A673 (cell line): ENCODE measurements at regions of chr1 and their contacts with region 1.

Region 1: GRCh38 chr1:36223993-36224536 is at the start of gene THRAP3:
- DNase-seq: peak; percentile 100
- H3K4me3 ChIP-seq: peak within 1 kb of the TSS; percentile 61
- H3K27ac ChIP-seq: peak within 1 kb of the TSS; percentile 95
- H3K4me1 ChIP-seq: peaks cover 13% of the 10 kb centered on the region
- H3K27me3 ChIP-seq: no peaks in the 10 kb centered on the region
- CTCF ChIP-seq: no peak
- total RNA-seq, gene THRAP3: 133 and 143 TPM in 2 replicates

Region 2: DNA sequence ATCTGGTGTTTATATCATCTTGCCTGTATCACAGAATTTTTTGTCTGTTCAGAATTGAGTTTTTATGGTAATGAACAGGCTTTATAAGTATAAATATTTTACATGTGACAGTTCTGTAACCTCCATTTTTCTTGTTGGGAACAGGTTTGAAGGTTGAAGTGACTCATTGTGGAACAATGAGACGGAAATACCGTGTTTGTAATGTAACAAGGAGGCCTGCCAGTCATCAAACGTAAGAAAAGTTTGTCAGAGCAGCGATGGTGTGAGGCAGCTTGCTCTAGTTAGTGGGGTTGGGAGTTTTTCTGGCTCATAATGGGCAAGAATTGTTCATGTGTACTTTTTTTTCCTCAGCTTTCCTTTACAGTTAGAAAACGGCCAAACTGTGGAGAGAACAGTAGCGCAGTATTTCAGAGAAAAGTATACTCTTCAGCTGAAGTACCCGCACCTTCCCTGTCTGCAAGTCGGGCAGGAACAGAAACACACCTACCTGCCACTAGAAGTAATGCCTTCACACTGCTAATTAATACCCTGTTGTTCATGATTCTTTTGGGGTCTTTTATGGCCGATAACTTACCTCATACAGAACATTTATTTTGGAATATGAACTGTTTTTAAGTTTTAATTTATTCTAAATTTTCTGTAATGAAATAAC is 215.4 kb before region 1 on chr1:
- CTCF ChIA-PET with region 1: no interaction called
- POLR2A ChIA-PET with region 1: no interaction called
- intact Hi-C with region 1: no loop called
- DNase-seq: no peak
- H3K4me3 ChIP-seq: no peak overlapping the region
- H3K27ac ChIP-seq: no peak overlapping the region
- H3K4me1 ChIP-seq: no peaks in the 10 kb centered on the region
- H3K27me3 ChIP-seq: no peaks in the 10 kb centered on the region
- CTCF ChIP-seq: no peak

Region 3: GRCh38 chr1:36248250-36248894 is 24.3 kb after region 1 on chr1:
- CTCF ChIA-PET with region 1: interaction called, 11 read pairs
- POLR2A ChIA-PET with region 1: no interaction called
- intact Hi-C with region 1: no loop called
- DNase-seq: no peak
- H3K4me3 ChIP-seq: no peak overlapping the region
- H3K27ac ChIP-seq: no peak overlapping the region
- H3K4me1 ChIP-seq: peaks cover 10% of the 10 kb centered on the region
- H3K27me3 ChIP-seq: no peaks in the 10 kb centered on the region
- CTCF ChIP-seq: no peak

Region 4: DNA sequence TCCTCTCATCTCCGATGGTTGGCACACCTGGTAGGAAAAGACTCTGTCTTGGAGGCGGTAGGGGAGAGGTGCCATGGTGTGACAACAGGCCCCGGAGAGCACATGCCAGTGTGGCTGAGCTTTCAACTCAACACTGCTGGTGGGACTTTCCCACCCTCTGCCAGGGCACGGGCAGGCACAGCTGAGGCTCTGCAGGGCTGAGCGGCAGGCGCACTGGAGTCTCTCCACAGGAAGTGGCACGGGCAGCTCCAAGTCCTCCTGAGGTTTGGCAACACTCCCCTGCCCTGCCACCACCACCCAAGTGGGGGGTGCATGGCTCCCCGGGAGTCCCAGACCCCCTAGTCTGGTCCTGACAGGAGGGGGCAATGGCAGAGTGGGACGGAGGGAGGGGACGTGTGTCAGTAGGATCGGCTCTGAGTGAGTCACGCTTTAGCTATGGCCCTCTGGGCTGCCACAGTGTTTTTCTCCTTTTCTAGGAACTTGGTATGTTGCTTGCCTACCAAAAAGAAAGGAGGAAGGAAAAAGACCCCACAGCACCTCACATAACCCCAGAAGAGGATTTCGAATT is 126.7 kb after region 1 on chr1:
- CTCF ChIA-PET with region 1: no interaction called
- POLR2A ChIA-PET with region 1: no interaction called
- intact Hi-C with region 1: no loop called
- DNase-seq: peak; percentile 49
- H3K4me3 ChIP-seq: no peak overlapping the region
- H3K27ac ChIP-seq: peak overlapping the region; percentile 66
- H3K4me1 ChIP-seq: peaks cover 19% of the 10 kb centered on the region
- H3K27me3 ChIP-seq: no peaks in the 10 kb centered on the region
- CTCF ChIP-seq: no peak

Region 5: DNA sequence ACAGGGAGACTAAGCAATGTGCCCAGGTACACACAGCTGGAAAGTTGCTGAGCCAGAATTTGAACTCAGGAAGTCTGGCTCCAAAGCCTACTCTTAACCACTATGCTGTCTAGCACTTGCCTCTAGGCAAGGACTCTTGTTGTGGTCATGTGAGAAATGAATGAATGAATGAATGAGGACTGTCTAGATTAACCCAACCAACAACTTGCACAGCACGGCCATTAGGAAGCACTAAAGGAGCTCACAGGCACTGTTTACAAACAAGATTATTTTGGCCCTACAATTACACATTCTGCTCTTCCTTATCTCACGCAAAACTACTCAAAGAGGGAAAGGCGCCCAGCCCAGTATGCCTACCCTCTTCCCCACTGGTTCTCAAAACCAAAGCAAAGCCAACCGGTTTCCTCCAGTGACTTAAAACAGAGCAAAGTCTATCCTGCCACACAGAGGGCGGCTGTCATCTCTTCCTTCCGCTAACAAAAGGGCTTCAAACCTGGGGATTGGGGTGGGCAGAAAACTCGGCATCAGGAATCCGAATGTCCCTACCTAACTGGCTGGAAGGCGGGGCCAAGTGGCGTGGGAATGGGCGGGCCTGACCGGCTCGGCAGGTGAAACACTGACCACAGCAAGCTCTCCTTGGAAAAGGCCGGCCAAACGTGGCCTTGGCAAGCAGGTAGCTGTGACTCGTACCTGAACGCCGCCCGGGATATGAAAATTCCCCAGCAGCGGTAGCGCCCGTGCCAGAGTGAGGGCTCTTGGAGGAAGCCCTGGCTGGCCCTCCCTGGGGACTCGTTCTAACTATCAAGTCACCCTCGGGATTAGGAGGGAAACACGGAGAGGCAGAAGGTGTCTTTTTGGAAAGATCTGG is 160.7 kb after region 1 on chr1:
- CTCF ChIA-PET with region 1: no interaction called
- POLR2A ChIA-PET with region 1: no interaction called
- intact Hi-C with region 1: no loop called
- DNase-seq: peak; percentile 67
- H3K4me3 ChIP-seq: peak overlapping the region; percentile 88
- H3K27ac ChIP-seq: peak overlapping the region; percentile 100
- H3K4me1 ChIP-seq: peaks cover 45% of the 10 kb centered on the region
- H3K27me3 ChIP-seq: no peaks in the 10 kb centered on the region
- CTCF ChIP-seq: no peak